Activated CD8-positive, alpha-beta T cell treated with anti-CD3 and anti-CD28 coated beads for 36 hours (primary cell): ENCODE measurements at regions of chrX and their contacts with region 1.

Region 1: GRCh38 chrX:24371391-24371972 is 11.0 kb downstream of the SUPT20HL1 start:
- DNase-seq: peak; percentile 82
- ATAC-seq: peak; percentile 79
- H3K4me3 Mint-ChIP-seq: peak overlapping the region; percentile 41
- H3K27ac Mint-ChIP-seq: no peak overlapping the region
- H3K4me1 Mint-ChIP-seq: peaks cover 4% of the 10 kb centered on the region
- H3K27me3 Mint-ChIP-seq: peaks cover 8% of the 10 kb centered on the region
- CTCF ChIP-seq: peak; percentile 58

Region 2: DNA sequence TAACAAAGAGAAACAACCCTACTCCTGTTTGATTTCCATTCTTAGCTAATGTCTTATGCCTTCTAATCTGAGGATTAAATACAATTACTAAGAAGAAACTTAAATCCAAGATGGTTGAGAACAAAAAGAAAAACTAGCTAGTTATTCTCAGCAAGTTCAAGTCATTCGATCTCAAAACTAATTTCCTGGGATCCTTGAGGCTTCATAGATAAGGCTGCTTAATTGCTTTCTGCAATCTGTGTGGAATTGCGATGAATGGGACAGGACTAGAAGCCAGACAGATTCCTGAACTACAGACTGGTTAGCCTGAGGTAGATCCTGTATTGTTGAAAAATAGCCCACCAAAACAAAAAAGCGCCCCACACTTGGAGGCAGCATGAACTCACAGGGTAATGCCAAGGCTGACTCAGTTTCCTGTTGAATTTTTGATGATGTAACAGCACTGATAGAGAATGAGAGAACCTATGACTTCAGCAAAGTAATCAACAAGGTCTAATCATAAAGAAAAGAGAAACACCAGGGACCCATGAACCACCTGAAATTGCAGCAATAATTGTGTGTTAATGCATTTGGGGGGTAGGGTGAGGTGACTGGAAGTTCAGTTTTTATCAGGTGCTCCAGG is 378.4 kb before region 1 on chrX:
- CTCF ChIA-PET with region 1: no interaction called
- POLR2A ChIA-PET with region 1: no interaction called
- intact Hi-C with region 1: no loop called
- DNase-seq: peak; percentile 9
- ATAC-seq: peak; percentile 61
- H3K4me3 Mint-ChIP-seq: no peak overlapping the region
- H3K27ac Mint-ChIP-seq: peak overlapping the region; percentile 78
- H3K4me1 Mint-ChIP-seq: peaks cover 22% of the 10 kb centered on the region
- H3K27me3 Mint-ChIP-seq: no peaks in the 10 kb centered on the region
- CTCF ChIP-seq: no peak

Region 3: DNA sequence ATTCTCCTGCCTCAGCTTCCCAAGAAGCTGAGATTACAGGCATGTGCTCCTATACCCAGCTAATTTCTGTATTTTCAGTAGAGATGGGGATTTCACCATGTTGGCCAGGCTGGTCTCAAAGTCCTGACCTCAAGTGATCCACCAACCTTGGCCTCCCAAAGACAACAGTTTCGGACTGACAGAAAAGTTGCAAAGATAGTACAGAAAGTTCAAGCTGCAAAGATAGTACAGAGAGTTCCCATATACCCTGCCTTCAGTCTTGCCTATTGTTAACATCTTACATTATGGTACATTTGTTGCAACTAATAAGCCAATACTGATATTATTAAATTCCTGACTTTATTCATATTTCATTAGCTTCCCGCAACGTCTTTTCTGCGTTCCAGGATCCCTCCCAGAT is 123.4 kb before region 1 on chrX:
- CTCF ChIA-PET with region 1: no interaction called
- POLR2A ChIA-PET with region 1: no interaction called
- intact Hi-C with region 1: no loop called
- DNase-seq: no peak
- ATAC-seq: no peak
- H3K4me3 Mint-ChIP-seq: no peak overlapping the region
- H3K27ac Mint-ChIP-seq: no peak overlapping the region
- H3K4me1 Mint-ChIP-seq: peaks cover 10% of the 10 kb centered on the region
- H3K27me3 Mint-ChIP-seq: no peaks in the 10 kb centered on the region
- CTCF ChIP-seq: no peak

Region 4: DNA sequence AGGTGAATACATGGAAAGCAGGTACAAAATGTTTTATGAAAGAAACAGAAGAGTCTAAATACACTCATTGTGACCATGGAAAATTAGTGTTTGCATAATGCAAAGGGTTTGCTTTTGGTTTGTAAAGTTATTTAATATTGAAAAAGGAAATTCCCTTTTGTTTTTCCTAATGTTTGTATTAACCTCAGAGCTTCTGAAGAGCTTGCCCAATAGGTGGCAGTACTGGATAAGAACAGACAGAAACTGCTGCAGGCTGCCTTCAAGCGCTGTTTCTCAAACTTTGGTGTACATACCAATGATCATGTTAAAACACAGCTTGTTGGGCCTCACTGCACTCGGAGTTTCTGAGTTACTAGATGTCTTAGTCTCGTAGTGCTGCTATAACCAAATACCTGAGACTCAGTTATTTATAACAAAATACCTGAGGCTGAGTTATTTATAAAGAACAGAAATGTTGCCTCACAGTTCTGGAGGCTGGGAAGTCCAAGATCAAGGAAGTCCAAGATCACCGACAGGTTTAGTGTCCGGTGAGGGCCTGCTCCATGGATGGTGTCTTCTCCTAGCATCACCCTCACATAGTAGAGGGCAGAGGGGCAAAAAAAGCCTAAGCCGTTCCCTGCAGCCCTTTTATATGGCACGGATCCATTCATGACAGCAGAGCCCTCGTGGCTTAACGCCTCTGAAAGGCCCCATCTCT is 111.8 kb before region 1 on chrX:
- CTCF ChIA-PET with region 1: interaction called, 19 read pairs
- POLR2A ChIA-PET with region 1: interaction called, 3 read pairs
- intact Hi-C with region 1: no loop called
- DNase-seq: peak; percentile 43
- ATAC-seq: peak; percentile 51
- H3K4me3 Mint-ChIP-seq: no peak overlapping the region
- H3K27ac Mint-ChIP-seq: no peak overlapping the region
- H3K4me1 Mint-ChIP-seq: peaks cover 13% of the 10 kb centered on the region
- H3K27me3 Mint-ChIP-seq: no peaks in the 10 kb centered on the region
- CTCF ChIP-seq: peak; percentile 37

Region 5: GRCh38 chrX:24357106-24357505 is 14.4 kb before region 1 on chrX:
- CTCF ChIA-PET with region 1: interaction called, 17 read pairs
- POLR2A ChIA-PET with region 1: no interaction called
- intact Hi-C with region 1: no loop called
- DNase-seq: no peak
- ATAC-seq: no peak
- H3K4me3 Mint-ChIP-seq: no peak overlapping the region
- H3K27ac Mint-ChIP-seq: no peak overlapping the region
- H3K4me1 Mint-ChIP-seq: no peaks in the 10 kb centered on the region
- H3K27me3 Mint-ChIP-seq: no peaks in the 10 kb centered on the region
- CTCF ChIP-seq: no peak

Region 6: DNA sequence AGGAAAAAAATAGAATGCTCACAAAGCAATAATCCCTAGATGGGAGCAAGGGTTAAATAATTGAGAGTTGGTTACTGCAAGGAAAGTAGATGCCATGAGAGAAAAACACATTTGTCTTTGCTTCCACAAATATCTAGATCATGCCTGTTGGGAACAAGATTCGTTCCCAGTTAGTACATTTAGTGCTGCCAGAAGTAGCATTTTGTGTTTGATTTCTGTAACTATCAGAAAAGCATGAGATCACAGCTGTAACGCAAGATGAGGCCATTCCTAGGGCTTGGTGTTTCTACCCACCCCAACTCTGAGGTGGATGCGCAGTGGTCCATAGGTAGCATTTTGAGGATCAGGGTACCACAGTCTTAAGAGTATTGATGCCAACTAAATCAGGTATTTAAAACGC is 73.2 kb after region 1 on chrX:
- CTCF ChIA-PET with region 1: no interaction called
- POLR2A ChIA-PET with region 1: no interaction called
- intact Hi-C with region 1: no loop called
- DNase-seq: no peak
- ATAC-seq: no peak
- H3K4me3 Mint-ChIP-seq: no peak overlapping the region
- H3K27ac Mint-ChIP-seq: no peak overlapping the region
- H3K4me1 Mint-ChIP-seq: no peaks in the 10 kb centered on the region
- H3K27me3 Mint-ChIP-seq: no peaks in the 10 kb centered on the region
- CTCF ChIP-seq: no peak

Region 7: DNA sequence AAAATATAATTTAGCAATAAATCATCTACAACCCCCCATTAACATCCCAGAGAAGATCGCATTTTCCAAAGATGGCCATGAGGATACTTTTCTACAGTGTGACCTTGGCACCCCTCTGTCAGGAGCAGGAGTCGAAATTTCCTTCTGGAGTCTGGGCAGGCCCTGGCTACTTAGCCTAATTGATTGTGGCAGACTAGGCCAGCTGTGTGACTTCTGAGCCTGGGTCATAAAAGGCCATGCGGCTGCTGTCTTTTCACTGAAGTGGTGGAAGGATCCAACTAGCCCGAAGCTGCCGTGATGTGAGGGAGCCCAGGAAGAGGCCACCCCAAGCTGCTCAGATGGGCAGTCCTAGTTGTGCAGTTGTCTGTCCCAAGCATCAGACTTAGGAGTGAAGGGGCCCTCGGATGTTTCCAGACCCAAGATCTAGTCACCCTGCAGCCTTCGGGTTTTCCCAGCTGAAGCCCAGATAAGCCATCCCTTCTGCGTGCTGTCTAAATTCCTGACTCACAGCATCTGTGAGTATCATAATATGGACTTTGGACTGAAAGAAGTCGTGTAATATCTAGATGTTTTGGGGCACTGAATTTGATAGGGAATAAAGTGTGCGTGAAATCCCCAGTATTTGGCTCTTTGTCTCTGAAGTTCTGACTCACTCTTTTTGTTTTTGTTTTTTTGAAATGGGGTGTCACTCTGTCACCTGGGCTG is 114.6 kb after region 1 on chrX:
- CTCF ChIA-PET with region 1: no interaction called
- POLR2A ChIA-PET with region 1: no interaction called
- intact Hi-C with region 1: no loop called
- DNase-seq: no peak
- ATAC-seq: no peak
- H3K4me3 Mint-ChIP-seq: no peak overlapping the region
- H3K27ac Mint-ChIP-seq: no peak overlapping the region
- H3K4me1 Mint-ChIP-seq: peaks cover 40% of the 10 kb centered on the region
- H3K27me3 Mint-ChIP-seq: no peaks in the 10 kb centered on the region
- CTCF ChIP-seq: no peak